ENCODE measurements at regions of chr4 and their contacts with region 1.

Region 1: GRCh38 chr4:123816462-123816861 is 419.9 kb downstream of the SPRY1 start:
- DNase-seq: no peak
- ATAC-seq: no peak
- H3K4me3 ChIP-seq: no peak overlapping the region
- H3K27ac ChIP-seq: peak overlapping the region in 2 of 4 donors; percentile 14 to 20
- H3K4me1 ChIP-seq: peaks cover 33 to 42% of the 10 kb centered on the region in 2 donors
- H3K27me3 ChIP-seq: no peaks in the 10 kb centered on the region
- CTCF ChIP-seq: no peak
- POLR2A ChIP-seq: no peak

Region 2: GRCh38 chr4:123785538-123785937 is 30.9 kb before region 1 on chr4:
- in situ Hi-C with region 1: no loop called
- intact Hi-C with region 1: loop called (anchors 2 kb)
- DNase-seq: peak; percentile 64 to 81
- ATAC-seq: peak; percentile 79 to 92
- H3K4me3 ChIP-seq: no peak overlapping the region
- H3K27ac ChIP-seq: peak overlapping the region; percentile 68 to 79 (median 72)
- H3K4me1 ChIP-seq: peaks cover 18 to 31% of the 10 kb centered on the region in 2 donors
- H3K27me3 ChIP-seq: no peaks in the 10 kb centered on the region
- CTCF ChIP-seq: no peak
- POLR2A ChIP-seq: no peak

Region 3: DNA sequence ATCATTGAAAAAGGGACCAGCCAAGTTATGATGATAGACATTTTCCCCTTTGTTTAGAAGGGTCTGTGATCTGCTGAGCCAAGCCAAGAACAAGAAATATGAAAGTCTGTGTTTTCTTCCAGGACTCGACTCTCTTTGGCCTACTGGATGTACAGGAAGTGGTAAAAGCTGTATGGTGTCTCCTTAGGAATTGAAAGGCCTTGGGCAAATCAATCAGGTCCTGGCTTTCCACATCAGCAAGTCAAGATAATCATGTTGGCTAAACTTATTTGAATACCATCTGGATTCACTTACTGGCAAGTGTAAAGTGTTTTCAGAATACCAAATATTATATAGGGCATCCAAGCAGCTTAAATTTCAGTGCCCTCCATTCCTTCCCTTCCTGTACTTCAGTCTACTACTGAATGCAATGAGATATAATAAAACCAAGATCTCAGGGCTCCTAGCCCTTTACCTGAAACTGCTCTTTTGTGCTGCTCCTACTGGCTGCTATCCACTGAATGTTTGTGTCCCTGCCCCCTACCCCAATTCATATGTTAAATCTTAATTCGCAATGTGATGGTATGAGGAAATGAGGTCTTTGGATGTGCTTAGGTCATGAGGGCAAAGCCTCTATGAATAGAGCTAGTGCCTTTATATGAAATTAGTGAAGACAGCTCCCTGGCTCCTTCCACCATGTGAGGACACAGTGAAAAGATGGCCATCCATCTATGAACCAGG is 158.1 kb after region 1 on chr4:
- in situ Hi-C with region 1: no loop called
- intact Hi-C with region 1: loop called (anchors 1 kb)
- DNase-seq: no peak
- ATAC-seq: no peak
- H3K4me3 ChIP-seq: no peak overlapping the region
- H3K27ac ChIP-seq: no peak overlapping the region
- H3K4me1 ChIP-seq: peaks cover 0 to 5% of the 10 kb centered on the region in 2 donors
- H3K27me3 ChIP-seq: no peaks in the 10 kb centered on the region
- CTCF ChIP-seq: no peak
- POLR2A ChIP-seq: no peak

Measured in gastrocnemius medialis (tissue), 4 donors.